ENCODE measurements at regions of chr12 and their contacts with region 1.

Region 1: GRCh38 chr12:103632554-103633216 is 45.6 kb downstream of the STAB2 start:
- DNase-seq: peak; percentile 82
- H3K4me3 Mint-ChIP-seq: no peak overlapping the region
- H3K27ac Mint-ChIP-seq: no peak overlapping the region
- H3K4me1 Mint-ChIP-seq: no peaks in the 10 kb centered on the region
- H3K27me3 Mint-ChIP-seq: no peaks in the 10 kb centered on the region
- CTCF ChIP-seq: peak; percentile 99

Region 2: DNA sequence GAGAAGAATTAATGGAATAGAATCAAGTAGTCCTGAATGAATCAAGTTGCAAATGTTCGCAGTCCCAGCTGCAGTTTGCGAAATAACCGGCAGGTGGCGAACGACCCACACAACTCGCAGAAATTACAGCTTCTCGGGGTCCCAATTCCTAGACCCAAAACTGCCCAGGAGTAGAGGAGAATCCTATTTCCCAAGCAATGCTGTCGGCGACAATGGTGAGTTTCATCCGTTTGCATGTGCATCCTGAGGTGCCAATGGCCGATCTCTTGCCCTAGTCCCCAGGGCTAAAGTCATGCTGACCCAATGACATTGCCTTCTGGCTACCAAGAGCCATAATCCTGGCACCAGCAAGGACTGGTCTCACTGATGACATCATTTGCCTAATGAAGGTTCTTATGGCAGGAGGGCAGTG is 683.7 kb before region 1 on chr12:
- CTCF ChIA-PET with region 1: no interaction called
- POLR2A ChIA-PET with region 1: no interaction called
- intact Hi-C with region 1: loop called (anchors 1 kb)
- DNase-seq: peak; percentile 42
- H3K4me3 Mint-ChIP-seq: no peak overlapping the region
- H3K27ac Mint-ChIP-seq: no peak overlapping the region
- H3K4me1 Mint-ChIP-seq: no peaks in the 10 kb centered on the region
- H3K27me3 Mint-ChIP-seq: peaks cover 20% of the 10 kb centered on the region
- CTCF ChIP-seq: peak; percentile 93

Region 3: GRCh38 chr12:103495479-103496456 is 136.9 kb before region 1 on chr12 and contains the start of gene C12orf42:
- CTCF ChIA-PET with region 1: interaction called, 3 read pairs
- POLR2A ChIA-PET with region 1: no interaction called
- intact Hi-C with region 1: loop called (anchors 5 kb)
- DNase-seq: peak; percentile 58
- H3K4me3 Mint-ChIP-seq: peak within 1 kb of the TSS; percentile 70
- H3K27ac Mint-ChIP-seq: no peak within 1 kb of the TSS
- H3K4me1 Mint-ChIP-seq: peaks cover 6% of the 10 kb centered on the region
- H3K27me3 Mint-ChIP-seq: no peaks in the 10 kb centered on the region
- CTCF ChIP-seq: peak; percentile 55
- total RNA-seq, gene C12orf42: not detected in 2 replicates

Region 4: DNA sequence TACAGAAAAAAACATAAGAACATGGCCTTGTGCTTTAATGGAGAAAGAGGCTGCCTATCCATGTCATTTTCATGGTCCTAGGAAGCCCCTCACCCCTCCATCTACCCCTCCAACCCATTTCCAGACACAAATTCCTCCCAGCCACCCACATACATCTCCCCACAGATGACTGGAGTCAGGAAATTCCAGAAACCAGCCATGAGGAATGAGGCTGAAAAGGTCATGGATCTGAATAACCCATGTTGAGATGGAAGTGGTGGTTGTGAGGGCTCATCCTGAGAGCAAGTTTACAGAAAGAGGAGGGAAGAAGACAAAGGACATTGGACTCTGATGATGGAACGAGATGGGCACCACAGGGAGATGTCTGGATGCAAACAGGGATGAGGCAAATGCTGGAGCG is 113.1 kb before region 1 on chr12:
- CTCF ChIA-PET with region 1: no interaction called
- POLR2A ChIA-PET with region 1: no interaction called
- intact Hi-C with region 1: no loop called
- DNase-seq: no peak
- H3K4me3 Mint-ChIP-seq: no peak overlapping the region
- H3K27ac Mint-ChIP-seq: no peak overlapping the region
- H3K4me1 Mint-ChIP-seq: peaks cover 8% of the 10 kb centered on the region
- H3K27me3 Mint-ChIP-seq: no peaks in the 10 kb centered on the region
- CTCF ChIP-seq: no peak

Region 5: GRCh38 chr12:103571286-103571685 is 61.4 kb before region 1 on chr12:
- CTCF ChIA-PET with region 1: interaction called, 3 read pairs
- POLR2A ChIA-PET with region 1: no interaction called
- intact Hi-C with region 1: loop called (anchors 1 kb)
- DNase-seq: no peak
- H3K4me3 Mint-ChIP-seq: no peak overlapping the region
- H3K27ac Mint-ChIP-seq: no peak overlapping the region
- H3K4me1 Mint-ChIP-seq: peaks cover 9% of the 10 kb centered on the region
- H3K27me3 Mint-ChIP-seq: peaks cover 11% of the 10 kb centered on the region
- CTCF ChIP-seq: no peak

Region 6: DNA sequence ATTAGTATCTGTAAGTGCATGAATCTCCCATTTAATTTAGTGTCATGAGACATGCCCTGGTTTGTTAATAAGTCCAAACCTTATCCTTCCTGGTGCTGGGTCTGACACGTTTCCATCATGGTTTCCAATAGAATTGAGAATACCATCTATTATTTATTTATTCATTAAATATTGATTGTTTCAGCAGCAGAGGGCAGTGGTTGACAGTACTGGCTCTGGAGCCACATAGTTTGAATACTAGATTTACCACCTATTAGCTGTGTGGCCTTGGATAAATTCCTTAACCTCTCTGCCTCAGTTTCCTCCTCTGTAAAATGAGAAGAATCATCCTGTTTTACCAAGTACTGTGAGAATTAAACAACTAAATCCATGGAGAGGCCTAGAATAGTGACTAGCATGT is 46.6 kb before region 1 on chr12:
- CTCF ChIA-PET with region 1: no interaction called
- POLR2A ChIA-PET with region 1: interaction called, 3 read pairs
- intact Hi-C with region 1: loop called (anchors 2 kb)
- DNase-seq: peak; percentile 8
- H3K4me3 Mint-ChIP-seq: no peak overlapping the region
- H3K27ac Mint-ChIP-seq: no peak overlapping the region
- H3K4me1 Mint-ChIP-seq: peaks cover 6% of the 10 kb centered on the region
- H3K27me3 Mint-ChIP-seq: no peaks in the 10 kb centered on the region
- CTCF ChIP-seq: no peak